ENCODE measurements at regions of chr15 and their contacts with region 1.

Region 1: GRCh38 chr15:96330450-96331145 is at the start of gene NR2F2:
- DNase-seq: peak; percentile 93
- H3K4me3 ChIP-seq: peak within 1 kb of the TSS; percentile 90
- H3K27ac ChIP-seq: peak within 1 kb of the TSS; percentile 91
- H3K4me1 ChIP-seq: peaks cover 36% of the 10 kb centered on the region
- H3K27me3 ChIP-seq: no peaks in the 10 kb centered on the region
- CTCF ChIP-seq: no peak
- total RNA-seq, gene NR2F2: 48.4 and 72.1 TPM in 2 replicates

Region 2: GRCh38 chr15:95259513-95259912 is 1071.1 kb before region 1 on chr15:
- CTCF ChIA-PET with region 1: interaction called, 12 read pairs
- POLR2A ChIA-PET with region 1: interaction called, 3 read pairs
- intact Hi-C with region 1: loop called (anchors 2 kb)
- DNase-seq: peak; percentile 49 to 51
- H3K4me3 ChIP-seq: no peak overlapping the region
- H3K27ac ChIP-seq: no peak overlapping the region
- H3K4me1 ChIP-seq: no peaks in the 10 kb centered on the region
- H3K27me3 ChIP-seq: no peaks in the 10 kb centered on the region
- CTCF ChIP-seq: peak; percentile 86

Region 3: GRCh38 chr15:95760501-95760900 is 570.1 kb before region 1 on chr15:
- CTCF ChIA-PET with region 1: no interaction called
- POLR2A ChIA-PET with region 1: no interaction called
- intact Hi-C with region 1: loop called (anchors 5 kb)
- DNase-seq: peak in 1 of 2 experiments; percentile 9
- H3K4me3 ChIP-seq: no peak overlapping the region
- H3K27ac ChIP-seq: no peak overlapping the region
- H3K4me1 ChIP-seq: no peaks in the 10 kb centered on the region
- H3K27me3 ChIP-seq: no peaks in the 10 kb centered on the region
- CTCF ChIP-seq: no peak

Region 4: DNA sequence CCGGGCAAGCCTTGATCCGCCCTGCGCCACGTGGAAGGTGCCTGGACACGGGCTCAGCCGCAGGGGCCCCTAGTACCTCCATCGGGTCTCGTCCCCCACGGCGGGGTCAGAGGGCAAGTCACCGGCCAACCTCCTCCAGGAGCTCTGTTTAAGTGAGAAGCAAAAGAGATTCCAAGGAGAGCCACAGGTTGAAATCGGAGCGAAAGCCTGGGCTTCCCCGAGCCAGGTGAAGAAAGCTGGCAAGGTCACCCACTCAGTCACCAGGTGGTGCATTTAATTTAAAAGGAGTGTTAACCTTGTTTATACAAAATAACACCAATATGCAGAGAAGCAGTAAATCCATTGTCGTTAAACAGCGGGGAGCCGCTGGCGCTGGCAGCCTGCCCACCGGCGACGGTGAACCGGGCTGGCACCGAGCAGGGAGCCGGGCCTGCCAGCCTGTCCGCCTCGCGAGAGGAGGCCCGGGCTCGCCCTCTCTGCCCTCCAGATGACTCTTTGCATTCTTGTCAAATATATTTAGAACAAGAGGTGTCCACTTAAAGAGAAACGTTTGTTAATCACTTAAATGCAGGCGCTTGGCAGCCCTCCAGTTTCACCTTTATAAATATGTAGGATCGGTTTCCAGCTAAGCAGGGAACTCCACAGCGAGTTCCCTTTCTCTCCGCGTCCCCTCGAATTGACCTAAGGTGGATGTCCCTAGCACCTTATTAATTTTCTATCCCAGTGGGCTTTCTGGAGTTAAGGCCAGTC is 277.4 kb before region 1 on chr15:
- CTCF ChIA-PET with region 1: no interaction called
- POLR2A ChIA-PET with region 1: no interaction called
- intact Hi-C with region 1: loop called (anchors 1 kb)
- DNase-seq: peak; percentile 79 to 84
- H3K4me3 ChIP-seq: peak overlapping the region; percentile 68
- H3K27ac ChIP-seq: peak overlapping the region; percentile 92
- H3K4me1 ChIP-seq: peaks cover 53% of the 10 kb centered on the region
- H3K27me3 ChIP-seq: no peaks in the 10 kb centered on the region
- CTCF ChIP-seq: no peak

Region 5: DNA sequence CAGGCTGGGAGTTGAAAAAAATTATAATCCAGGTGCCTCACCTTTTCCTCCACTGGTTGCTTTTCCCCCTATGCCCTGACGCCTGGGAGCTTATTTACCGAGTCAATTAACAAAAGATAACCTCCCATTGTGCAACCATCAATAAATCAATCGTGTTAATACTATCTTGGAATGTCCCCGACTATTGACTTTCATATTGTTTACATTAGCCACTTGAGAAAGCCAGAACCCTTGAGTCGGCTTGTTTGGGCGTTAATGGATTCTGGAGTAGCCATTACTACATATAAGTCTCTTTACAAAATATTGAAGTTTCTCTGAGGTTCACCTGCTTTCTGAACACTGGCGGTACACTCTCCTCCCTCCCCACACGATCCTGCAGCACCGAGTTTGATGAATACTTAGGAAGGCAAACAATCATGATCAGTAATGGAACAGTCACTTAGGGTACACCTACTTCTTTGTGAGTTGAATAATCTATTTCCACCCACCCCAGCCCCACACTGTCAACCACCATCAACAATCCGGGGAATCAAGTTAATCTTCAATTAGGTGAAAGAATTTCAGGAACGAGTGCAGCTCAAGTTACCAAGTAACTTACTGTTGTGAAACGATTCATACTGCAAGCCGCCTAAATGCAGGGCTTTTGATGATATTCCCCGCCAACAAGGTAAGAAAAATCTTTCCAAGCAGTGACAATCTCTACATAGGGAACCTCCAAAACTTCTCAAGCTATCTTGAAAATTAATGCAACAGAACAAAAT is 159.4 kb before region 1 on chr15:
- CTCF ChIA-PET with region 1: no interaction called
- POLR2A ChIA-PET with region 1: no interaction called
- intact Hi-C with region 1: loop called (anchors 2 kb)
- DNase-seq: peak in 1 of 2 experiments; percentile 14
- H3K4me3 ChIP-seq: no peak overlapping the region
- H3K27ac ChIP-seq: no peak overlapping the region
- H3K4me1 ChIP-seq: no peaks in the 10 kb centered on the region
- H3K27me3 ChIP-seq: no peaks in the 10 kb centered on the region
- CTCF ChIP-seq: no peak

Region 6: GRCh38 chr15:96273317-96274086 is 57.1 kb before region 1 on chr15:
- CTCF ChIA-PET with region 1: interaction called, 16 read pairs
- POLR2A ChIA-PET with region 1: interaction called, 46 read pairs
- intact Hi-C with region 1: loop called (anchors 1 kb)
- DNase-seq: peak; percentile 85 to 100
- H3K4me3 ChIP-seq: no peak overlapping the region; the same call in 1 of the 2 replicates
- H3K27ac ChIP-seq: peak overlapping the region; percentile 95
- H3K4me1 ChIP-seq: peaks cover 86% of the 10 kb centered on the region
- H3K27me3 ChIP-seq: no peaks in the 10 kb centered on the region
- CTCF ChIP-seq: no peak

Measured in PC-9 (cell line).